ENCODE measurements at regions of chr3 and their contacts with region 1.

Region 1: DNA sequence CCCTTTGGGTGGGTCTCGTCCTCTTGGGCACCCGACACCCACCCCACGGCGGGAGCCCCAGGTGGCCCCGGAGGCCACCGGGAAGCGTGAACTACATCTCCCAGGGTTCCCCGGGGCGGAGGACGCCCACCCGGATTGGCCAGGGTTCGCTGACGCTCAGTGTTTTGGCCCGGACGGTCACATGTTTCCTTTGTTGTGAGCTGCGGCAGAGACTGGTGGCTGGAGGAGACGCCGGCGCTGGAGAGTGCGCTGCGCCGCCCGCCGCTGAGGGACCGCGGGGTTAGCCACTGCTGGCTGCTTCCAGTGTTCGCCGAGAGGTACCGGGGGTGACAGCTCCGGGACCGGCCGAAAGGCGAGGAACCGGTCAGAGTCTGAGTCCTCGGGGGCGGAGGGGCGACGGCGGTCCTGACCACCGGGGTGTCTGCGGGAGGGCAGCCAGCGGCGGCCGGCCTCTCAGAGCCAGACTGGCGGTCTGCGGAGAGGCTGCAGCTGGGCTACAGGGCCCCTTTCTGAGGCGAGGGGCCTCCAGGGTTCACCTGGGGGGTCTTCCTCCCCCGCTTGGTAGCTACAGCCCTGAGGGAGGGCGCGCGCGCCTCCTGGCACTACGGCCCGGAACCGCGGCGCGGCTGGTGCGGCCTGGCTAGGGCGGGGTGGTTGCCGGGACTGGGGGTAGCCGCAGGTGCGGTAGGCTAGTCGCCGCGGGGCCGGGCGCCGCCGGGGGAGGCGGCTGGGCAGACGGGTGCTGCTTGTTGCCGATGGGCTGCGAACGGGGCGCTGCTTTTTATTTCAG is at the start of gene KLHL24:
- DNase-seq: peak; percentile 92 to 95
- ATAC-seq: peak; percentile 89 to 96 (median 92)
- H3K4me3 ChIP-seq: peak within 1 kb of the TSS; percentile 71 to 100 (median 97)
- H3K27ac ChIP-seq: peak within 1 kb of the TSS; percentile 92 to 100 (median 98)
- H3K4me1 ChIP-seq: peaks cover 11 to 44% (median 36%) of the 10 kb centered on the region in 9 donors
- H3K27me3 ChIP-seq: no peaks in the 10 kb centered on the region
- CTCF ChIP-seq: no peak
- total RNA-seq, gene KLHL24: 159 to 305 (median 259) TPM

Region 2: DNA sequence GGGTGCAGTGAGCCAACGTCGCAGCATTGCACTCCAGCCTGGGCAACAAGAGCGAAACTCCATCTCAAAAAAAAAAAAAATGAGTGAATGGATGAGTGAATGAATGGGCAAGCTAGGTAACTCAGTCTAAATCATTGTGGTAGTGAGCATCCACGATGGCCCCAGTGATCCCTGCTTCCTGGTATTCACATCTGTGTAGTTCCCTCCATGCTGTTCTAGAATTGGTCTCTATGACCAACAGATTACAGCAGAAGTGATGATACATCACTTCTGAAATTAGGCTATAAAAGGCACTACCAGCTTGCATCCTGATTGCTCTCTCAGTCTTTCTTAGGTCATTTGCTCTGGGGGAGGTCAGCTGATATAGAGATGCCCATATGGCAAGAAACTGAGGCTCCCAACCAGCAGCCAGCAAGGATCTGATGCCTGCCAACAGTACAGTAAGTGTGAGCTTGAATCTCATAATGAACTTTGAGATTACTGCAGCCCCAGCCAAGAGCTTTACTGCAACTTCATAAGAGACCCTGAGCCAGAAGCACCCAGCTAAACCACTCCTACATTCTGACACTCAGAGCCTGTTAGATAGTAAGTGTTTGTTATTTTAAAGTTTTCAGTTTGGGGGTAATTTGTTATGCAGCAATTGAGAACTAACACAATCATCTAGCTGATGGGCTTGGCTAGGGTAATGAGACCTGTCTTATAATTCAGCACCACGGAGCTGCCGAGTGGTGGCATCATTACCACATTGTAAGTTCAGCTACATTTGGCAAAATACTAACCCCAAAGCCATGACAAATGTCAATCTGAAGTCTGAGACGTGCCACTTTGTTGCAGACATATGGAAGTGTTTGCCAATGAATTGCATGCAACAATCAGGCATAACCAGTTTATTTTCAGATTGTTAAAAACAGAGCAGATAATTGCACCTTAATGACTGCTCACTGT is 133.1 kb before region 1 on chr3:
- intact Hi-C with region 1: loop called in 1 of 10 experiments (anchors 5 kb)
- DNase-seq: no peak
- ATAC-seq: peak; percentile 40 to 84 (median 78)
- H3K4me3 ChIP-seq: no peak overlapping the region
- H3K27ac ChIP-seq: no peak overlapping the region
- H3K4me1 ChIP-seq: peaks cover 0 to 5% (median 0%) of the 10 kb centered on the region in 9 donors
- H3K27me3 ChIP-seq: no peaks in the 10 kb centered on the region
- CTCF ChIP-seq: peak in 8 of 9 donors; percentile 26 to 63 (median 44)

Region 3: DNA sequence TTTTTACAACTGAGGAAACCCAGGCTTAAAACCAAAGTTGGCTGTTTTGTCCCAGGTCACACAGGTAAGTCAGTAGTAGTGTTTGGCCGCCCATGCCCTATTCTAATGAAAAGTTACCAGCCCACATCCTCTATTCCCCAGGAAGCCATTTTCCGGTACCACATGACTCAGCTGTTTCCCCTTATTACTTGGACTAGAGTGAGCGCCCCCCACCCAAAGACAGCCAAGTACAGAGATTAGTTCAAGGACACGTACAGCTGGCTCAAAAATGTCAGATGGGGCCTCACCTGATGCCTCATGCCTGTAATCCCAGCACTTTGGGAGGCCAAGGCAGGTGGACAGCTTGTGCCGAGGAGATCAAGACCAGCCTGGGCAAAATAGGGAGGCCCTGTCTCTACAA is 71.6 kb before region 1 on chr3:
- intact Hi-C with region 1: no loop called
- DNase-seq: no peak
- ATAC-seq: no peak
- H3K4me3 ChIP-seq: no peak overlapping the region
- H3K27ac ChIP-seq: peak overlapping the region in 3 of 10 donors; percentile 19 to 42 (median 20)
- H3K4me1 ChIP-seq: peaks cover 0 to 32% (median 21%) of the 10 kb centered on the region in 9 donors
- H3K27me3 ChIP-seq: no peaks in the 10 kb centered on the region
- CTCF ChIP-seq: no peak

Region 4: DNA sequence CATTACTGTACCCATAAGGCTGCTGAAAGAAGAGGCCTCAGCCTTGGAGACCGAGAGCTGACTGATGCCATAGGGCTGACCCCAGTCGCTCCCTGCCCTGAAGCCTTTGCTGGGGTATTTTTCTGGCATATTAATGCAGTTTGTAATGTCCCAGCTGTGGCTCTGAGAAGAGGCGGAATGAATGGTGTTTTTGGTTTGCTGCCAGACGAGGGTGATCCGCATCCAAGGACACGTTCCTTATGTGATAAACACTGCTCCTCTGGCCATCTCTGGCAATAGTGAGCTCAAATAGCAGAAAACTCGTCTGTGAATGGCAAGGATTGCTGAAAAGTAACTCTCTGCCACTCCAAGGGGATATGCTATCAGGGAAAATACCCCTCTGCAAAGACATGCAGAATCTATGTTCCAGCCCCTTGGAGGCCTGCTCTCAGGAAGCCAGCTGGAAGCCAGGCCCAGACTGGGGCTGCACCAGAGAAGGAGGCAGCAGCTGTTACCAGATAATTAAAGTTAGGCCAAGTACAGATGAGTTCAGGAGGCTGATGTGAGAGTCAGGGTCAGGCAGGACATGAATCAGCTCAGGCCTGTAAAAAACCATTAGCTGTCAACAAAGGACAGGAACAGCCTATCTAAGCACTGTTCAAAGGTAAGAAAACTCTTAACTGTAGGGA is 51.2 kb before region 1 on chr3:
- intact Hi-C with region 1: loop called in 3 of 10 experiments (anchors 1 to 5 kb)
- DNase-seq: peak; percentile 41 to 66
- ATAC-seq: peak; percentile 75 to 85 (median 77)
- H3K4me3 ChIP-seq: no peak overlapping the region
- H3K27ac ChIP-seq: peak overlapping the region; percentile 4 to 83 (median 71)
- H3K4me1 ChIP-seq: peaks cover 16 to 81% (median 66%) of the 10 kb centered on the region in 9 donors
- H3K27me3 ChIP-seq: no peaks in the 10 kb centered on the region
- CTCF ChIP-seq: no peak

Region 5: DNA sequence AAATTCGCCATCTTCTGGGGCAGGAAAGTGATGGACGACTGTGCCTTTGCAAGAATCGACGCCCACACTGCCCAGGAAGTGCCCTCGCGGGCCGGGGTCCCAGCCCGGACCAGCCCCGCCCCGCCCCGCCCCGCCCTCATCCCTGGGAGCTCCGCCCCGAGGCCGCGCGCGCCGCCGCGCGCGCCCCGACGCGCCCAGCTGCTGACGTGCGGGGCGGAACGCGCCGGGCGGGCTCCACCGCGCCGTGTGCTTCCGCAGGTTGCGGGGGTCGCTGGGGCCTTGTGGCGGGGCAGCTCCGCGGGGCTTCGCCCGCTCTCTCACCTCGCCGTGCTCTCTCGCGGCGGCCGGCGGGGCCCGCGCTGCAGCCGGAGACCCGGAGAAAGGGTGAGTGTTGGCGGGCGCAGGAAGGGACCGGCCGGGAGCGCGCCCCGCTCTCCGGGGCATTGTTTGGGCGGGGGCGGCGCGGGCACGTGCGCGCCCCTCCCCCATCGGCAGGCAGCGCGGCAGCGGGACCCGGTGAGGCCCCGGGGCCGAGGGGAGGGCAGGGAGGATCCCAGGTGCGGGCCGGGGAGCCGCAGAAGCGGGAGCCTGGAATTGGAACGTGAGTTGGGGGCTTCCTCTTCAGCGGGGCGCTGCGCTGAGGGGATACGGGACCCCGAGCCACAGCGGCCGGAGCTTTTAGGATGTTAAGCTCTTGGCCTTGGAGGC is 62.1 kb after region 1 on chr3 and contains the start of gene YEATS2:
- intact Hi-C with region 1: loop called in 2 of 10 experiments (anchors 2 to 5 kb)
- DNase-seq: peak; percentile 42 to 68
- ATAC-seq: peak; percentile 76 to 94 (median 88)
- H3K4me3 ChIP-seq: peak within 1 kb of the TSS; percentile 74 to 100 (median 98)
- H3K27ac ChIP-seq: peak within 1 kb of the TSS; percentile 75 to 98 (median 94)
- H3K4me1 ChIP-seq: peaks cover 0 to 35% (median 21%) of the 10 kb centered on the region in 9 donors
- H3K27me3 ChIP-seq: no peaks in the 10 kb centered on the region
- CTCF ChIP-seq: no peak
- total RNA-seq, gene YEATS2: 8.0 to 22.2 (median 10.5) TPM

Measured in heart right ventricle (tissue), 16 donors.